ENCODE measurements at regions of chr13 and their contacts with region 1.

Region 1: GRCh38 chr13:95536632-95537241 is 15.8 kb upstream of the CLDN10 start:
- DNase-seq: no peak
- H3K4me3 ChIP-seq: no peak overlapping the region
- H3K27ac ChIP-seq: no peak overlapping the region
- H3K4me1 ChIP-seq: peaks cover 0 to 3% (median under 1%) of the 10 kb centered on the region in 4 experiments; a peak in 3 of 7 replicates
- H3K27me3 ChIP-seq: no peaks in the 10 kb centered on the region
- CTCF ChIP-seq: peak in 1 of 3 experiments; percentile 29; a peak in 1 of 4 replicates
- EP300 ChIP-seq: no peak
- POLR2A ChIP-seq: no peak
- RAD21 ChIP-seq: peak in 1 of 2 experiments; percentile 4; a peak in 3 of 4 replicates

Region 2: GRCh38 chr13:95499811-95500712 is 36.7 kb before region 1 on chr13:
- CTCF ChIA-PET with region 1: interaction called, 10 read pairs
- POLR2A ChIA-PET with region 1: no interaction called
- DNase-seq: no peak
- H3K4me3 ChIP-seq: no peak overlapping the region
- H3K27ac ChIP-seq: no peak overlapping the region
- H3K4me1 ChIP-seq: peaks cover 0 to 2% (median 0%) of the 10 kb centered on the region in 4 experiments; a peak in 4 of 7 replicates
- H3K27me3 ChIP-seq: no peaks in the 10 kb centered on the region
- CTCF ChIP-seq: no peak
- EP300 ChIP-seq: no peak
- POLR2A ChIP-seq: no peak
- RAD21 ChIP-seq: no peak

Region 3: DNA sequence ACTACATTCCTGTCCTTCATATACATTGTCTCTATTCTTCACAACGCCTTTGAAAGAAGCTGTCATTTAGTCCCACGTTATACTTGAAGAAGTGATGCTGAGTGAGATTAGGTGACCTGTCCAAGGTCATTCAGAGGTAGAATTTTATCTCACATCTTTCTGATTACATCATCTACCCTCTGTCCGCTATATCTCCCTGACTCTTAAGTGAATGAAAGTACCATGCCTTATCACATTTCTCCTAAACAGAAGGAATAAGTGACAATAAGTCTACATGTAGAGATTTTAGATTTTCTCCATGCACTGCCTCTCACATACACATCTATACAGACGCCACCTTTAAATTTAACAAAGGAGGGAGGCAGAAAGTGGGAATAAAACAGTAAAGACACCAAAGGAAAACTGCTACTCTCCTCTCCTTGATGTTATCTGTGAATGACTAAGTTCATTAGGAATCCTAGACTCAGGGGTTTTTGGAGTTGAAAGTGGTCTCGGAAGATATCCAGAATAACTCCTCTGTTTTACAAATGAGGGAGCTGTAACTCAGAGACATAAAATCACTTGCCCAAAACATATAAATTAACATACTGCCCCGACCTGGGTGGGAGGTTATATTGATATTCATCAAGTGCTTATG is 10.9 kb after region 1 on chr13:
- CTCF ChIA-PET with region 1: interaction called, 25 read pairs
- POLR2A ChIA-PET with region 1: interaction called, 3 read pairs
- DNase-seq: no peak
- H3K4me3 ChIP-seq: no peak overlapping the region
- H3K27ac ChIP-seq: no peak overlapping the region
- H3K4me1 ChIP-seq: peaks cover 3 to 13% (median 5%) of the 10 kb centered on the region in 4 experiments; a peak in 5 of 7 replicates
- H3K27me3 ChIP-seq: peaks cover 0 to 2% (median 0%) of the 10 kb centered on the region in 4 experiments; a peak in 3 of 7 replicates
- CTCF ChIP-seq: no peak
- EP300 ChIP-seq: no peak
- POLR2A ChIP-seq: no peak
- RAD21 ChIP-seq: no peak

Region 4: GRCh38 chr13:95552539-95553441 is 16.1 kb after region 1 on chr13 and contains the start of gene CLDN10:
- CTCF ChIA-PET with region 1: interaction called, 25 read pairs
- POLR2A ChIA-PET with region 1: interaction called, 3 read pairs
- DNase-seq: peak; percentile 53 to 94
- H3K4me3 ChIP-seq: peak within 1 kb of the TSS; percentile 61 to 96 (median 77)
- H3K27ac ChIP-seq: no peak within 1 kb of the TSS
- H3K4me1 ChIP-seq: peaks cover 2 to 12% (median 3%) of the 10 kb centered on the region in 4 experiments; a peak in 5 of 7 replicates
- H3K27me3 ChIP-seq: peaks cover 0 to 3% (median 1%) of the 10 kb centered on the region in 4 experiments; a peak in 5 of 7 replicates
- CTCF ChIP-seq: peak; percentile 51 to 89 (median 75)
- EP300 ChIP-seq: no peak
- POLR2A ChIP-seq: peak in 1 of 2 experiments; percentile 80; a peak in 2 of 3 replicates
- RAD21 ChIP-seq: peak; percentile 51 to 64
- total RNA-seq, gene CLDN10: 36.0 and 41.2 TPM in 2 replicates

Region 5: GRCh38 chr13:95614641-95615245 is 78.0 kb after region 1 on chr13:
- CTCF ChIA-PET with region 1: no interaction called
- POLR2A ChIA-PET with region 1: no interaction called
- DNase-seq: no peak
- H3K4me3 ChIP-seq: no peak overlapping the region
- H3K27ac ChIP-seq: no peak overlapping the region
- H3K4me1 ChIP-seq: no peaks in the 10 kb centered on the region
- H3K27me3 ChIP-seq: no peaks in the 10 kb centered on the region
- CTCF ChIP-seq: no peak
- EP300 ChIP-seq: no peak
- POLR2A ChIP-seq: no peak
- RAD21 ChIP-seq: no peak

Region 6: DNA sequence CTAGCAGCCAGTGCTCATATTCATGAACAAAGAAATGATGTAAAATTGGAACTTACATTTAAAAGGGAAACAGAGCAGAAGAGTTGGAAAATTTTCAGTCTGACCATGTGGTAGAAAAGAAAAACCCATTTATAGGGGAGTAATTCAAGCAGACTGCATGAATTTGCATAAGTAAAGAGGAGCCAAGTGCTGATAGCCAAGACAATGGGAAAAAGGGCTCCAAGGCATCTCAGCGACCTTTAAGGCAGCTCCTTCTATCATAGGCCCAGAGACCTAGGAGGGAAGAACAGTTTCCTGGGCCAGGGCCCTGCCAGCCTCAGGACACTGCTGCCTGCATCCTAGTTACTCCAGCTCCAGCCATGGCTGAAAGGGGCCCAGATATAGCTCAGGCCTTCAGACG is 147.7 kb after region 1 on chr13:
- CTCF ChIA-PET with region 1: no interaction called
- POLR2A ChIA-PET with region 1: no interaction called
- DNase-seq: no peak
- H3K4me3 ChIP-seq: no peak overlapping the region
- H3K27ac ChIP-seq: no peak overlapping the region
- H3K4me1 ChIP-seq: peaks cover 0 to 8% (median 3%) of the 10 kb centered on the region in 4 experiments; a peak in 4 of 7 replicates
- H3K27me3 ChIP-seq: no peaks in the 10 kb centered on the region
- CTCF ChIP-seq: no peak
- EP300 ChIP-seq: no peak
- POLR2A ChIP-seq: no peak
- RAD21 ChIP-seq: no peak

Region 7: DNA sequence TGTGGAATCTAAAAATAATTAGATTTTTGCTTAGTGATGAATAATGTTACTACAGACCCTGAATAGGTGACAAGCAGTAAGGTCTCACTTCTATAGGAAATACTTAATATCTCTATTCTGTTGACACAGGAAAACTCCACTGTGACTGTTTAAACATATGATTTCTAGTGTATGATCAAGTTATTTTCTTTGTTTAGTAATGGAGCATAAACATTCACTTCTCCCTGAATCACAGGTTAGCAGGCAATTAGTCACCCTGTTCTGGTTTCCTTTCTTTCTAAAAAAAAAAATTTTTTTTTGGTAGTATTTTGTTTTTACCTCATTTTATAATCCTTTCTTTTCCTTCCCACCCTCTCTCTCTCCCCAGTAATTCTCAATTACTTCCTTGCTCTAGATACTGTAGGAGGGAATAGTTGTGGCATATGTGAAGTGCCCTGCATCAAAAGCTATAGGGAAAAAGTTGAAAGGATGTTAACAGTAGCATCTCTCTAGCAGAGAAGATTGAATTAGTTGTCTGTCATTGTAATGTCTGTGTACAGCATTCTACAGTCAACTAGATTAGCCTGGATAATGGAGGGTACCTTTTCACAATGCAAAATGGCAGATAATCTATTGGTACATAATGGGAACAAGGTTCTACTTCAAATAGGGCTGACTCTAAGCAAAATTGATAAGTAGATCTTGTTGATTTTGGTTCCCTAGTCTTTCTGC is 556.7 kb after region 1 on chr13:
- CTCF ChIA-PET with region 1: no interaction called
- POLR2A ChIA-PET with region 1: no interaction called
- DNase-seq: no peak
- H3K4me3 ChIP-seq: no peak overlapping the region
- H3K27ac ChIP-seq: no peak overlapping the region
- H3K4me1 ChIP-seq: peaks cover 0 to 3% (median 1%) of the 10 kb centered on the region in 4 experiments; a peak in 3 of 7 replicates
- H3K27me3 ChIP-seq: peaks cover 23 to 45% (median 32%) of the 10 kb centered on the region in 4 experiments
- CTCF ChIP-seq: no peak
- EP300 ChIP-seq: no peak
- POLR2A ChIP-seq: no peak
- RAD21 ChIP-seq: no peak

Measured in H1 (cell line).